Naive thymus-derived CD4-positive, alpha-beta T cell (primary cell): ENCODE measurements at regions of chr10 and their contacts with region 1.

Region 1: DNA sequence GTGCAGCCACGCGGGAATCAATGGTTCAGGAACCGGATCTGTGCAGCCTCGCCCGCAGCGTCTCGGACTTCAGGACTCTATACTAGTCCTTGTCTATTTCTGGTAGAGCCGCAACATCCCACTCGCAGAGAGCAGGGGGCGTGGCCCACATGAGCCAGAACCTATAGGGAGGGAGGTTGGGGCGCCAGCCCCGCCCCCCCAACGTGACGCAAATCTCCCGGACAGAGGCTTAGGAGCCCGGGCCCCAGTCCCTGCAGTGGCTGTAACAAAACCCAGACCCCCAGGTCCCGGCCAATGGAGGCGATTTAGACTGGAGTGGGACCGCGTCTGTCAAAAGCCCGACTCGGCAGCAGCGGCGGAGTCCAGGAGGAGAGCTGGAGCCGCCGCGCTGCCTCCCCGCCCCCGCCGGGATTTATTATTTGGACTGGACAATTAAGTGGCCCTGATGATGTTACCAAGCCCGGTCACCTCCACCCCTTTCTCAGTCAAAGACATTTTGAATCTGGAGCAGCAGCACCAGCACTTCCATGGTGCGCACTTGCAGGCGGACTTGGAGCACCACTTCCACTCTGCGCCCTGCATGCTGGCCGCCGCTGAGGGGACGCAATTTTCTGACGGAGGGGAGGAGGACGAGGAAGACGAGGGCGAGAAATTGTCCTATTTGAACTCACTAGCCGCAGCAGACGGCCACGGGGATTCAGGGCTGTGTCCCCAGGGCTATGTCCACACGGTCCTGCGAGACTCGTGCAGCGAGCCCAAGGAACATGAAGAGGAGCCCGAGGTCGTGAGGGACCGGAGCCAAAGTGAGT is at the start of gene NKX2-3:
- DNase-seq: no peak
- ATAC-seq: peak; percentile 59
- H3K4me3 ChIP-seq: no peak within 1 kb of the TSS
- H3K4me3 Mint-ChIP-seq: peak within 1 kb of the TSS; percentile 18 to 70 (median 52)
- H3K27ac ChIP-seq: no peak within 1 kb of the TSS
- H3K27ac Mint-ChIP-seq: peak within 1 kb of the TSS in 1 of 9 donors; percentile 71
- H3K4me1 ChIP-seq: peaks cover 0 to 10% of the 10 kb centered on the region in 2 donors
- H3K4me1 Mint-ChIP-seq: peaks cover 33 to 65% (median 50%) of the 10 kb centered on the region in 7 donors
- H3K27me3 ChIP-seq: peaks cover 5 to 30% of the 10 kb centered on the region in 2 donors
- H3K27me3 Mint-ChIP-seq: peaks cover 73 to 94% (median 85%) of the 10 kb centered on the region in 5 donors
- total RNA-seq, gene NKX2-3: not detected

Region 2: DNA sequence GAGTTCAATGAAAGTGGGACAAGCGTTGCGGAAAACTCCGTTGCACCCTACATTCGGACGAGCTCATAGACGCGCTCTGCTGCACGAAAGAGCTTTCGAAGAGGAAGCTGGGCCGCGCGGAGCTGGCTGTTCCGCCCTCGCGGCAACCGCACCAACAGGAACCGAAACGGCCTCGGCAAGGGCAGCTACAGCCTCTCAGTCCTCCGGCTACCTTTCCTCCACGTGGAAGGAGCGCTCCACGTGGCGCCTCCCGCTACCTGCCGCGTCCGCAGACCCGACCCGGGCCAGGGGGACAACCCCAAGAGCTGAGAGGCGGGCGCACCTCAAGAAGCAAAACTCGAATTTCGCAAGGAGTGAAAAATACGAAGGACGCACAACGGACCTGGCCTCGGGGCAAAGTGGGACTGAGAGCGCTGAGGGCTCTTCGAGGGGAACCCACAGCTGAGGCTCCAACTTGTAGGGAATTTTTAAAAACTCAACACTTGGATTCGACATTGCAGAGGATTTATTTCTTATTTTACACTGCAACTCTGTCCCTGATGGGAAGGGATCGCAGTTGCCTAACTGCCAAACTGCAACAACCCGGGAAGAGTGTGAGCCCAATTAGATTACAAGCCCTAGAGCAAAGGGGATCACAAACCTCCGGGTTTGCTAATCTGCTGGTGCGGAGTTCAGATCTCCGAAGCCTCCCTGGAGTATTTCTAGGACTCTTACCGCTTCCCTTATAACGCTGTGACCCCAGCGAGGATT is 298.7 kb before region 1 on chr10:
- CTCF ChIA-PET with region 1: no interaction called
- POLR2A ChIA-PET with region 1: no interaction called
- intact Hi-C with region 1: loop called in 1 of 2 experiments (anchors 5 kb)
- DNase-seq: peak in 3 of 9 donors; percentile 3 to 42 (median 21)
- ATAC-seq: peak; percentile 69
- H3K4me3 ChIP-seq: peak overlapping the region; percentile 39
- H3K4me3 Mint-ChIP-seq: peak overlapping the region; percentile 42 to 82 (median 70)
- H3K27ac ChIP-seq: no peak overlapping the region
- H3K27ac Mint-ChIP-seq: peak overlapping the region in 1 of 9 donors; percentile 18
- H3K4me1 ChIP-seq: peaks cover 0 to 6% of the 10 kb centered on the region in 2 donors
- H3K4me1 Mint-ChIP-seq: peaks cover 12 to 41% (median 26%) of the 10 kb centered on the region in 7 donors
- H3K27me3 ChIP-seq: peaks cover 11 to 13% of the 10 kb centered on the region in 2 donors
- H3K27me3 Mint-ChIP-seq: peaks cover 75 to 90% (median 86%) of the 10 kb centered on the region in 5 donors

Region 3: DNA sequence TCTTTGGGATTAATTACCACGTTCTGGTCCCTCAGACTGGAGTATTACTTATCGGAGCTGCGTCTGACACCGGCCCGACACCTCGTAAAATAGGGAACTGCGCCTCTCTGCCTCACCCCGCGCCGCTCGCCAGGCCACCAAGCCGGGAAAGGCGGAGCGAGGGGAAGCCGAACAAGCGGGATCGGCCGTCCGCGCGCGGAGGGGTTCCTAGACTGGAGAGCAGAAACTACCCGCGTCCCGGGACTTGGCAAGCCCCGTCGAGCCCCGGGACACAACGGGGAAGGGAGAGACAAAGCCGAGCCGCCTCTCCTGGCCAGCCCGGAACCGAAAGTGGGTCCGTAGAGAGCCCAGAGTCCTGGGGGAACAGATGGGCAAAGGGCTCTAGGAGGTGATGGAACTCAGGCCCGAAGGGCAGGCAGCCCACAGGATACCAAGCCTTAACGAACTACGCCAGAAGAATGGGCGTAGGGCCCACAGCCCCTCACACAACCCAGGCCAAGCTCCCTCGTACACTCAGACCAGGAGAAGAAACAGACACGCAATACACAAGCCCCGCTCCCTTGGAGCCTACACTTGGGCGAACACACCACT is 1689.9 kb after region 1 on chr10:
- CTCF ChIA-PET with region 1: no interaction called
- POLR2A ChIA-PET with region 1: no interaction called
- intact Hi-C with region 1: loop called in 1 of 2 experiments (anchors 5 kb)
- DNase-seq: no peak
- ATAC-seq: peak; percentile 21
- H3K4me3 ChIP-seq: peak overlapping the region; percentile 23
- H3K4me3 Mint-ChIP-seq: peak overlapping the region in 8 of 10 donors; percentile 14 to 63 (median 59)
- H3K27ac ChIP-seq: no peak overlapping the region
- H3K27ac Mint-ChIP-seq: no peak overlapping the region
- H3K4me1 ChIP-seq: peaks cover 29 to 49% of the 10 kb centered on the region in 2 donors
- H3K4me1 Mint-ChIP-seq: peaks cover 27 to 48% (median 39%) of the 10 kb centered on the region in 7 donors
- H3K27me3 ChIP-seq: peaks cover 14 to 59% of the 10 kb centered on the region in 2 donors
- H3K27me3 Mint-ChIP-seq: peaks cover 75 to 91% (median 85%) of the 10 kb centered on the region in 5 donors